A549 (cell line): ENCODE measurements at regions of chr5 and their contacts with region 1.

Region 1: GRCh38 chr5:96614110-96614691 is 48.0 kb upstream of the CAST start:
- DNase-seq: peak; percentile 69 to 86
- ATAC-seq: peak; percentile 94 to 98
- H3K4me3 ChIP-seq: no peak overlapping the region
- H3K27ac ChIP-seq: peak overlapping the region; percentile 69 to 84
- H3K4me1 ChIP-seq: peaks cover 23% of the 10 kb centered on the region
- CTCF ChIP-seq: peak; percentile 94
- EP300 ChIP-seq: 0 out of 5 replicates have a peak, but pooled peaks of 1 of the 2 experiments have one; percentile 31
- POLR2A ChIP-seq: no peak
- RAD21 ChIP-seq: peak; percentile 95 to 98

Region 2: GRCh38 chr5:96565582-96566265 is 48.5 kb before region 1 on chr5:
- CTCF ChIA-PET with region 1: no interaction called
- POLR2A ChIA-PET with region 1: no interaction called
- DNase-seq: peak; percentile 21 to 44
- ATAC-seq: peak; percentile 79 to 80
- H3K4me3 ChIP-seq: no peak overlapping the region
- H3K27ac ChIP-seq: peak overlapping the region in 1 of 2 experiments; percentile 42; a peak in 3 of 6 replicates
- H3K4me1 ChIP-seq: peaks cover 30% of the 10 kb centered on the region; the same call in 2 of the 3 replicates
- CTCF ChIP-seq: no peak
- EP300 ChIP-seq: no peak
- POLR2A ChIP-seq: no peak
- RAD21 ChIP-seq: no peak

Region 3: GRCh38 chr5:96590797-96591196 is 23.4 kb before region 1 on chr5:
- CTCF ChIA-PET with region 1: no interaction called
- POLR2A ChIA-PET with region 1: no interaction called
- DNase-seq: no peak
- ATAC-seq: no peak
- H3K4me3 ChIP-seq: no peak overlapping the region
- H3K27ac ChIP-seq: no peak overlapping the region
- H3K4me1 ChIP-seq: peaks cover 14% of the 10 kb centered on the region; the same call in 2 of the 3 replicates
- CTCF ChIP-seq: no peak
- EP300 ChIP-seq: no peak
- POLR2A ChIP-seq: no peak
- RAD21 ChIP-seq: no peak

Region 4: DNA sequence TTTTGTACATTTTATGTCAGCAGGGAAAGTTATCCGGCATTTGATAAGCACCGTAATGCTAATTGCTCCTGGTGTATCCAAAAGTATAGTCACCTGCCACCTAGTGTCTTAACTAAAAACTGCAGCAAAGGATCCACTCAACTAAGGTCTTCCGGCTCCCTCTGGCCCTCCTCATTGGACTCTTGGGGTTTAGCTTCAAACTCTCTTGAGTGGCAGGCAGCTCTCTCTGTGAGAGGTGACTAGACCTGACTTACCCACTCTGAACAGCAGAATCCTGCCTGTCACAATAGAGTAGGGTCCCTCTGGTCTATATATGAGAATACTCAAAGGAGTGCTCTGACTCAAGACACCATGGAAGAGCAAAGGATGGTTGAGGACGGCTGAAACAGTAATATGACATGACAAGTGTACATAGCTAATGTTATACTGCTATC is 12.4 kb before region 1 on chr5:
- CTCF ChIA-PET with region 1: interaction called, 31 read pairs
- POLR2A ChIA-PET with region 1: no interaction called
- DNase-seq: peak; percentile 68 to 75
- ATAC-seq: peak; percentile 88 to 96
- H3K4me3 ChIP-seq: no peak overlapping the region
- H3K27ac ChIP-seq: peak overlapping the region; percentile 62 to 75
- H3K4me1 ChIP-seq: 0 out of 3 replicates have a peak, but pooled peaks cover 13% of the 10 kb centered on the region
- CTCF ChIP-seq: peak; percentile 85
- EP300 ChIP-seq: no peak
- POLR2A ChIP-seq: no peak
- RAD21 ChIP-seq: peak; percentile 86 to 89

Region 5: DNA sequence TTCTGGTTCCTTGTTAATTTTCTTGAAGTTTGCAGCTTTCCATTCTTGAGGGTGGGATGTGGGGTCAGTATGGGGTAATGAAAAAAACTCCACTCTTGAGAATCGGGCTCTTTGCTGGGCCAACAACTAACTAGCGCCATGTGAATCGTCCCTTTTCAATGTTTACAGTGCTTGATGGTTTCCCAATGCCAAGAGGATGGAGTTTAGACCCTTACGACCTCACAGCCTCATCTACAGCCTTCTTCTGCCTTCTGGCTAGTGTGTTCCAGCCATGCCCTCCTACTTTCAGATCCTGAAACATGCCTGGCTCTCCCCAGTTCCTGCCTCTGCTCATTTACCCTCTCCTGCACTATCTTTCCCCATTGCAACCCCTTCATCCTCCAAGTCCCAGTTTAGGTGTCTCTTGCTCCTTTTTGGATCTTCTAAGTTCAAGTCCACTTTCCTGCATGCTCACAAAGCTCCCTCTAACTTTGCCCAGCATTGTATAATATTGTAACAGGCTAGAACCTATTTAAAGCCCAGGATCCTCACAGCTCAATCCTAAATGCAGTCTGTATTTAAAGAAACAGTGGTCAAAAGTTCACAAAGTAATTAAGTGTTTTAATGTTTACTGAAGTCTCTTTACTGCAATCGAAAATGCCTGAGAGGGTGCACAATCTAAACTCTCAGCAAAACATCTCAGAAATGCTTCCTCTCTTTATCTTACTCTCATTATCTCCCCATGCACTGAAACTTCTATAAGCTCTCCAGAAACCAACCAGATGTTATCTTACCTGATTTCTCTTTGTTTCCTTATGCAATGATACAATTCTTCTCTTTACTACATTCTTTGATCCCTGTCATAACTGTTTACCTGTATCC is 27.4 kb after region 1 on chr5:
- CTCF ChIA-PET with region 1: interaction called, 11 read pairs
- POLR2A ChIA-PET with region 1: interaction called, 6 read pairs
- DNase-seq: peak in 1 of 2 experiments; percentile 63
- ATAC-seq: peak; percentile 77 to 88
- H3K4me3 ChIP-seq: no peak overlapping the region
- H3K27ac ChIP-seq: peak overlapping the region; percentile 58 to 82
- H3K4me1 ChIP-seq: peaks cover 30% of the 10 kb centered on the region
- CTCF ChIP-seq: no peak
- EP300 ChIP-seq: no peak
- POLR2A ChIP-seq: no peak
- RAD21 ChIP-seq: no peak

Region 6: DNA sequence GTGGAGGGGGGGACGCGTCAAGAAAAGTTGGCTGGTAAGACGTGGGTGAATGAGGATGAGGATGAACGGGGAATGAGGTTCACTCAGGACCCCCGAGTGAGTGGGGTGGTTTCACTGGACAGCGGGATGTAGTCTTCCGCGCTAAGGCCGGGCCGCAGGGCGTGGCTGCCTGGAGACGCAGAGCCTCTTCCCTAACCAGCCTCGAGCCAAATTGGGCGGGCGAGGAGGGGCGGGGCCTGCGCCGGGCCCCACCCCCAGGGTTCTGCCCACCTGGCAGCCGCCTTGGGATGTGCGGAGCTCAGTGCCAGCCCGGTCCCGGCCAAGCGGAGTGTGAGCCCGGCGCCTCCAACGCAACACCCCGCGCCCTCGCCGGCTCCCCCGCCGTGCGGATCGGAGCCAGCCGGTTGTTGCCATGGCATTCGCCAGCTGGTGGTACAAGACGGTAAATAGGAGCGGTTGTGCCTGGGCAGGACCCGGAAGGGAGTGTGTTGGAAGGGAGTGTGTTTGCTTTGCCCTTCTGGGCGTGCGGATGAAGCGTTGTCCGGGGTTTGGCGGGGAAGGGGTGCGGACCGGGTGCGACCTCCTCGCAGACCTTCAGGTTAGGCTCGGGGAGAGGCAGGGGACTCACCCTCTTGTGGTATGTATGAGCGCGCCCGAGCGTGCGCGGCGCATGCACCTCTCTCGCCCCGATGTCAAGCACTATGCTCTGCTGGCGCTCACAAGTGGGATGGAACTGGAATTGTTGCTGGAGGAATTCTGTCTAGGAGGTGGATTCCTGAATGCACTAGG is 48.7 kb after region 1 on chr5:
- CTCF ChIA-PET with region 1: interaction called, 17 read pairs
- POLR2A ChIA-PET with region 1: interaction called, 41 read pairs
- DNase-seq: peak; percentile 94 to 96
- ATAC-seq: peak; percentile 80 to 88
- H3K4me3 ChIP-seq: peak overlapping the region; percentile 93
- H3K27ac ChIP-seq: peak overlapping the region; percentile 98 to 100
- H3K4me1 ChIP-seq: peaks cover 63% of the 10 kb centered on the region
- CTCF ChIP-seq: no peak
- EP300 ChIP-seq: no peak
- POLR2A ChIP-seq: peak; percentile 73
- RAD21 ChIP-seq: no peak

Region 7: DNA sequence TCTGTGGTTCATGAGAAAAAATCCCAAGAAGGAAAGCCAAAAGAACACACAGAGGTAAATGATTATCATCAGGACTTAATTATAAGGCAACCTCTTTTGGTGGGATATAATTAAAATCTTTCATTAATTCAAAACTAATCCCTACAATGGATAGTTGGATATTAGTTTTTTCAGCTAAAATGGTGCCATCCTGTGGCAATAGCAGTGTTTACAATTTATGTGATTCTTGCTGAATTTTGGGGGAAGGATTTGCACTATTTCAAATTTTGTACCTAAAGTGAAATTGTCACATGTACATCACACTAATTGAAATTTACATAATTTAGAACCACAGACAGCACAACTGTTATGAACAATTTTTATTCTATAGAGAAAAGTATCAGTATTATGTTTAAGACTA is 115.0 kb after region 1 on chr5:
- CTCF ChIA-PET with region 1: interaction called, 54 read pairs
- POLR2A ChIA-PET with region 1: no interaction called
- DNase-seq: no peak
- ATAC-seq: no peak
- H3K4me3 ChIP-seq: no peak overlapping the region
- H3K27ac ChIP-seq: no peak overlapping the region
- H3K4me1 ChIP-seq: peaks cover 12% of the 10 kb centered on the region; the same call in 1 of the 3 replicates
- CTCF ChIP-seq: peak; percentile 49; the same call in 2 of the 3 replicates
- EP300 ChIP-seq: no peak
- POLR2A ChIP-seq: no peak
- RAD21 ChIP-seq: peak; percentile 48 to 49; a peak in 3 of 5 replicates

Region 8: DNA sequence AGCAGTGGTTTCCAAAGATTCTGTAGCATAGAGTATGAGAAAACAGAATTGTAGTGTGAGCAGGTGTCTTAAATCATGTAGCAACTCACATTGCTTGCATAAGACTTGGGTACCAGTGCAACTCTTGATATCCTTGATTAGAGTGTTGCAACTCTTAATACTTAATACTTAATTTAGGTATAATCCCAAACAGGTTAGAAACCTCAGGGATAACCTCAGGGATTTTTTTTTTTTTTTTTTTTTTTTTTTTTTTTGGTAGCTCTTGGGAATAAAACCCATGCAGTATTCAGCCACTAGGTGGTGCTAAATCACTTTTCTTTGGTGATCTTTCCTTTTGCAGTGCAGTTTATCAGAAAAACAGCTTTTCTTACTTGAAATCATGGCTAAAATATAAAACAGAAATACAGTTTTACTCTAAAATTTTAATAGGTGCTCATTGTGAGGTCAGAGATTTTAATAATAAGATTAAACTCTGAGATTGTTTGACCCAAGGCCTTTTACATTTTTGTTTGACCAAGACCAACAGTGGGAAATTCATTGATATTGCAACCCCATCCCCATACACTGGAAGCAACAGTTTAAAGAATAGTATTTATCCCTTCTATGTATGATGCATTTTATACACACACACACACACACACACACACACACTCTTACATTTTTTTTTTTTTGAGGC is 138.3 kb after region 1 on chr5:
- CTCF ChIA-PET with region 1: interaction called, 12 read pairs
- POLR2A ChIA-PET with region 1: no interaction called
- DNase-seq: peak; percentile 27 to 63
- ATAC-seq: peak in 1 of 2 experiments; percentile 60; a peak in 3 of 6 replicates
- H3K4me3 ChIP-seq: no peak overlapping the region
- H3K27ac ChIP-seq: no peak overlapping the region
- H3K4me1 ChIP-seq: no peaks in the 10 kb centered on the region
- CTCF ChIP-seq: peak; percentile 77
- EP300 ChIP-seq: no peak
- POLR2A ChIP-seq: no peak
- RAD21 ChIP-seq: peak; percentile 62 to 66

Region 9: DNA sequence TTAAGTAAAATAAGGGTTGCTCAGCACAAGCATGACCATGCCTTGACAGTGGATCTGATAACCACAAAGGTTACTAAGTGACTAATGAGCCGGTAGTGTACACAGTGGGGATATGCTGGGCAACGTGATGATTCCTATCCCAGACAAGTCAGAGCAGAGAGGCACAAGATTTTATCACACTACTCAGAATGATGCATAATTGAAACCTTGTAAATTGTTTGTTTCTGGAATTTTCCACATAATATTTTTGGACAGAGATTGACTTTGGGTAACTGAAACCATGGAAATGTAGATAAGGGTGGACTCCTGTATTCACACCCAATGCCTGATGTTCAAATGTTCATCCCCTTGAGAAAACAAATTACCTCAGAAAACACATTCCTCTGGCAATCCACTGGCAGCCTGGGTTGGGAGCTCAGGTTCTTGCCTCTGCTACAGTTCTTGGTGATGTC is 209.7 kb after region 1 on chr5:
- CTCF ChIA-PET with region 1: no interaction called
- POLR2A ChIA-PET with region 1: no interaction called
- DNase-seq: peak; percentile 23 to 53
- ATAC-seq: peak; percentile 93 to 95
- H3K4me3 ChIP-seq: no peak overlapping the region
- H3K27ac ChIP-seq: no peak overlapping the region
- H3K4me1 ChIP-seq: peaks cover 8% of the 10 kb centered on the region
- CTCF ChIP-seq: no peak
- EP300 ChIP-seq: no peak
- POLR2A ChIP-seq: no peak
- RAD21 ChIP-seq: no peak